ENCODE measurements at regions of chr15 and their contacts with region 1.

Region 1: DNA sequence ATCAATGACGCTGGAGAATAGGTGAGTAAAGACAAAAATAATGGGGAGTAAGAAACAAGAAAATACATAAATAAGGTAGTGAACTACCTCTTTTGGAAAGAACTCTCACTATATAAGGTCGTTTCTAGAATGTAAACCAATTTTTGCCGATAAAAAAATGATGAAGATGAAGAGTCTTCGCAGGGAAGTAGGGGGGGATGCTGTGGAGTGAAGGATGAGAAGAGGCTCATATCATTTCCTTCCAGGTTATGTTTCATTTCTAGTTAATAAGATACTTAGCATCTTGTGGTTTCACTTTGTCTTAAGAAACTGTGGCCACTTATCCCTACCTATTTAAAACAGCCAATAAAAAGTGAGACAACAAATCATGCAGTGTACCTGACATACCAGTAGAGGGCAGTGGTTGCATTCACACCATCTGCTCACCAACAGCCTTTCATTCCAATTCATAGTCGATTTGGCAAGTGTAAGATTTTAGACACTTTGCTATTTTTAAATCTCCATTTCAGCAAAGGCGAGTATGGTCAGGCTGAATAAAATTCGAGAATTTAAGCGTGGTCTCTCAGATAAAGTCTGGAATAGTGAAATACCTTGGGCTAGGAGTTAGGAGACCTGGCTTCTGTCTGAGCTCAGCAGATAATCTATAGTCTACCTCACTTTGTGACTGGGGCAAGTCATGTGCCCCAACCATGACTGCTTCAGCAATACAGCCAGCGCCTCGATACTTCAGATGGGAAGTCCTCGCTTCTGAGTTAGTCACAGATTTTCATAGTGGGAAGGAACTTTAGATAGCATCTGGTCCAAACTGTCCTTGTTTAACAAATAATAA is 28.9 kb upstream of the ICE2 start:
- DNase-seq: peak; percentile 21 to 40
- ATAC-seq: peak; percentile 76 to 83
- H3K4me3 ChIP-seq: no peak overlapping the region
- H3K27ac ChIP-seq: peak overlapping the region; percentile 54 to 64 (median 60)
- H3K4me1 ChIP-seq: peaks cover 28 to 35% of the 10 kb centered on the region in 2 donors
- H3K27me3 ChIP-seq: no peaks in the 10 kb centered on the region
- CTCF ChIP-seq: peak; percentile 86 to 94 (median 88)
- POLR2A ChIP-seq: no peak

Region 2: GRCh38 chr15:60462027-60462426 is 45.8 kb before region 1 on chr15:
- in situ Hi-C with region 1: no loop called
- intact Hi-C with region 1: no loop called
- DNase-seq: no peak
- ATAC-seq: no peak
- H3K4me3 ChIP-seq: no peak overlapping the region
- H3K27ac ChIP-seq: no peak overlapping the region
- H3K4me1 ChIP-seq: no peaks in the 10 kb centered on the region
- H3K27me3 ChIP-seq: no peaks in the 10 kb centered on the region
- CTCF ChIP-seq: no peak
- POLR2A ChIP-seq: no peak

Region 3: DNA sequence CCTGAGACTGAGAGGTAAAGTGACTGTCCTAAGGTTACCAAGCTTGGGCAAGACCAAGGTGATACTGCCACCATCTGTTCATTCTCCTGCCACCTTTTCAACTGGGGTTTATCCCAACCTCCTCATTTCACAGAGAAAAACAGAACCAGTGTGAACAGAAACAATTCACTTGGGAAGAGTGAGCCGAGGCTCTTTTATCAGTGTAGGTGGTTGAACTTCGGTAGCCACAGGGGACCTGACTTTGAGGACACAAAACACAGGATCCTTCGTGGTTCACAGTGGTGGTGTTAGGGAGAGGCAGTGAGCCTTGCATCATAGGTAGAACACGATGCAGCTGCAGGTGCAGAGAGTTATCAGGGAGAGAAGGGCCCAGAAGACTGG is 44.0 kb after region 1 on chr15:
- in situ Hi-C with region 1: no loop called
- intact Hi-C with region 1: loop called (anchors 5 kb)
- DNase-seq: no peak
- ATAC-seq: peak in 1 of 2 donors; percentile 36
- H3K4me3 ChIP-seq: no peak overlapping the region
- H3K27ac ChIP-seq: peak overlapping the region; percentile 53 to 75 (median 67)
- H3K4me1 ChIP-seq: peaks cover 91 to 92% of the 10 kb centered on the region in 2 donors
- H3K27me3 ChIP-seq: no peaks in the 10 kb centered on the region
- CTCF ChIP-seq: no peak
- POLR2A ChIP-seq: no peak

Region 4: GRCh38 chr15:60573936-60574335 is 66.1 kb after region 1 on chr15:
- in situ Hi-C with region 1: no loop called
- intact Hi-C with region 1: no loop called
- DNase-seq: no peak
- ATAC-seq: no peak
- H3K4me3 ChIP-seq: no peak overlapping the region
- H3K27ac ChIP-seq: no peak overlapping the region
- H3K4me1 ChIP-seq: peaks cover 47 to 65% of the 10 kb centered on the region in 2 donors
- H3K27me3 ChIP-seq: no peaks in the 10 kb centered on the region
- CTCF ChIP-seq: no peak
- POLR2A ChIP-seq: no peak

Region 5: DNA sequence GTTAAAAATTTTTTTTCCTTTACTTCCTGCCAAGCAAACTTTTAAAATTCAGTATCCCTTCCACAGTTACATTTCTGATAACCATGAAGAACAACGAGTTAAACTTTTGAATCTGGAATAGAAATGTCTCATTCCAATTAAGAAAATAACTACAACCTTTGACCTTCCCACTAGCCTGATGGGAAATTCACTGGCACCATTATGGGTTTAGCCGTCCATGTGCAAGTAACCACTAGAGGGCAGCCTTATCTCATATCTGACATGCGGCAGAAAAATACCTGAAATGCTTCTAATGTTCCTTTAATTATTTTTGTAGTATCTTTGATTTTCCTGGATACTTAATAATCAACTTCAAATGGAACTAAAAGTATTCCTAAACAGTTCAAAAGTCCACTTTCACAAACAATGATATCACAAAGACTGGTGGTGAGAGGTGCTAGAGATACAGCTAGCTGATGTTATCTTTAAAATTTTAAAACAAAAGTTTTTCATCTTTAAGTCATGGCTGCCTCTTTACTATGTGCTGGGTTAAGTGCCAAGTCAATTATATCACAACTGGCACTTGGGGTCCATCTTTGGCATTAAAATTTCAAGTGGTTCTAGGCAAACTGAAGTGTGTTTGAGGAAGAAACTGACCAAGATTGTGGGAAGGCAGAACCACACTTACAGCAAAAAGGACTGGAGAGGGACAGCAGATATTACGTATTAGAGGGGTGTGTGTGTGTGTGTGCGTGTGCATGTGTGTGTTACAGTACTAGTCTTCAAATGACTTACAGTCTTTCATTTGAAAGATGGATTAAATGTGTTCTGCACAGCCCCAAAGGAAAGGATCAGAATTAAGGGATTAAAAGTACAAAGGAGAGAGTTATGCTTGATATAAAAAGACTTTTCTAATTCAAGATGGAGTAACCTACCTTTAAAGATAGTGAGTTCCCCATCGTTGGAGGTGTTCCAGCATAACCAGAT is 78.2 kb after region 1 on chr15:
- in situ Hi-C with region 1: no loop called
- intact Hi-C with region 1: loop called (anchors 5 kb)
- DNase-seq: peak; percentile 32 to 38
- ATAC-seq: peak; percentile 64 to 78
- H3K4me3 ChIP-seq: no peak overlapping the region
- H3K27ac ChIP-seq: peak overlapping the region; percentile 12 to 64 (median 34)
- H3K4me1 ChIP-seq: peaks cover 76 to 95% of the 10 kb centered on the region in 2 donors
- H3K27me3 ChIP-seq: no peaks in the 10 kb centered on the region
- CTCF ChIP-seq: peak; percentile 83 to 94 (median 87)
- POLR2A ChIP-seq: no peak

Region 6: GRCh38 chr15:60635507-60636352 is 127.9 kb after region 1 on chr15:
- in situ Hi-C with region 1: no loop called
- intact Hi-C with region 1: no loop called
- DNase-seq: no peak
- ATAC-seq: no peak
- H3K4me3 ChIP-seq: no peak overlapping the region
- H3K27ac ChIP-seq: no peak overlapping the region
- H3K4me1 ChIP-seq: peaks cover 0 to 7% of the 10 kb centered on the region in 2 donors
- H3K27me3 ChIP-seq: no peaks in the 10 kb centered on the region
- CTCF ChIP-seq: no peak
- POLR2A ChIP-seq: no peak

Region 7: GRCh38 chr15:60932051-60932915 is 424.5 kb after region 1 on chr15:
- in situ Hi-C with region 1: no loop called
- intact Hi-C with region 1: loop called (anchors 1 kb)
- DNase-seq: peak; percentile 89 to 96
- ATAC-seq: peak; percentile 76 to 94
- H3K4me3 ChIP-seq: no peak overlapping the region
- H3K27ac ChIP-seq: peak overlapping the region; percentile 54 to 83 (median 65)
- H3K4me1 ChIP-seq: peaks cover 52 to 74% of the 10 kb centered on the region in 2 donors
- H3K27me3 ChIP-seq: no peaks in the 10 kb centered on the region
- CTCF ChIP-seq: peak; percentile 28 to 68 (median 62)
- POLR2A ChIP-seq: no peak